PC-3 (cell line): ENCODE measurements at regions of chr14 and their contacts with region 1.

Region 1: GRCh38 chr14:92649935-92650545 is 98.4 kb downstream of the LGMN start:
- DNase-seq: peak; percentile 72
- ATAC-seq: no peak
- H3K4me3 ChIP-seq: no peak overlapping the region
- H3K27ac ChIP-seq: peak overlapping the region; percentile 58
- H3K4me1 ChIP-seq: peaks cover 52% of the 10 kb centered on the region
- H3K27me3 ChIP-seq: no peaks in the 10 kb centered on the region
- CTCF ChIP-seq: no peak

Region 2: GRCh38 chr14:92625213-92625612 is 24.8 kb before region 1 on chr14:
- CTCF ChIA-PET with region 1: no interaction called
- POLR2A ChIA-PET with region 1: interaction called, 5 read pairs
- intact Hi-C with region 1: loop called (anchors 2 kb)
- DNase-seq: peak; percentile 95
- ATAC-seq: peak; percentile 94
- H3K4me3 ChIP-seq: no peak overlapping the region
- H3K27ac ChIP-seq: peak overlapping the region; percentile 95
- H3K4me1 ChIP-seq: peaks cover 24% of the 10 kb centered on the region
- H3K27me3 ChIP-seq: no peaks in the 10 kb centered on the region
- CTCF ChIP-seq: no peak

Region 3: DNA sequence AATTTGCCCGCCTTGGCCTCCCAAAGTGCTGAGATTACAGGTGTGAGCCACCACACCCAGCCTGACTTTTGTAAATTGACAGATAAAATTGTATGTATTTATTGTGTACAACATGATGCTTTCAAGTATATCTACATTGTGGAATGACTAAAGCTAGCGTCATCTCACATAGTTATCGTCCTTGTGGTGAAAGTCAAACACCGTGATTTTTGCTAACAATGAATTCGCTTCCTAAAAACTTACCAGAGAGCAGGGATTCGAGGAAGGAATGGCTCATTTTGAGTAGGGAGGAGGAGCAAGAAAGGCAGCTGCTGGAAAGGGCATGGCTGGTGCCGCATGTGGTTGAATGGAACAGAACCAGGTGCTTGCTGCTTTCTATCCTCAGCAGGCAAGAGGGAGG is 13.0 kb after region 1 on chr14:
- CTCF ChIA-PET with region 1: no interaction called
- POLR2A ChIA-PET with region 1: interaction called, 14 read pairs
- intact Hi-C with region 1: loop called (anchors 1 kb)
- DNase-seq: peak; percentile 95
- ATAC-seq: peak; percentile 96
- H3K4me3 ChIP-seq: no peak overlapping the region
- H3K27ac ChIP-seq: peak overlapping the region; percentile 74
- H3K4me1 ChIP-seq: peaks cover 6% of the 10 kb centered on the region
- H3K27me3 ChIP-seq: no peaks in the 10 kb centered on the region
- CTCF ChIP-seq: no peak

Region 4: DNA sequence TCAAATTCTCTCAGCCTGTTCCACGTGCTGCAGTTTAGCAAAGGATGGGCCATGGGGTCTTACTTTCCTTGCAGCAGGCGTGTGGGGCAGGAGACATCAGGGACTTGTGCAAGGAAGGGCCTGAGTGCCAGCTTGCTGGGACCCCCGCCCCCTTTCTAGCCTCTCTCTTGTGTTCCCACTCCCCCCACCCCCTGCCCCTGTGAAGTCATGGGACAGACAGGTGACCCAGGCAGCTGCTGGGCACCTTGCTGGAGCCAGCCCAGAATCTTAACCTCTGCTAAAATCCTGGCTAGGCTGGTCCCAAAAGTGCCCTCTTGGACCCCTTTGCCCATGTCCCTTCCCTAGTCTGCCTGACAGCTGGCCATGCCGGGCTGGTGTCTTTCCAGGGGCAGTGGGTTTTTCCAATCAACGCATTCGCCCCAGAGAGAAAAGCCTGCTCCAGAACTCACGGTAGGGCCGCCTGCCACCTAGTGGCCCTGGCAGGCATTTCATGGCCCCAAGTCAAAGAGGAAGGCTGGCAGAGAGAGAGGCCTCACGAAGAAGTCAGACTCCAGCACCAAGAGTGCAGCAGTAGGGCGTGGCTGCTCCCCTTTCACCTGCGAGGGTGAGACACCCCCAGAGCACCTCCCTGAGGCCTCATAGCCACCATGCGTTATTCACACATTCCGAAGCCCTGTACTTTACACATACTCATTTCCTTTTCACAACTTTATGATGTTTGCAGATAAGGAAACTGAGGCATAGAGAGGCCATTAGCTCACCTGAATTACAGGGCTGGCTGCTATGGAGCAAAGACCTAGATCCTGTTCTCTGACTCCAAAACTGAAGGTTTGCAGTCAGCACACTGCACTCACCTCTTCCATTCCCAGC is 31.0 kb after region 1 on chr14:
- CTCF ChIA-PET with region 1: no interaction called
- POLR2A ChIA-PET with region 1: no interaction called
- intact Hi-C with region 1: loop called (anchors 5 kb)
- DNase-seq: peak; percentile 92
- ATAC-seq: peak; percentile 93
- H3K4me3 ChIP-seq: no peak overlapping the region
- H3K27ac ChIP-seq: peak overlapping the region; percentile 82
- H3K4me1 ChIP-seq: peaks cover 12% of the 10 kb centered on the region
- H3K27me3 ChIP-seq: no peaks in the 10 kb centered on the region
- CTCF ChIP-seq: peak; percentile 94

Region 5: DNA sequence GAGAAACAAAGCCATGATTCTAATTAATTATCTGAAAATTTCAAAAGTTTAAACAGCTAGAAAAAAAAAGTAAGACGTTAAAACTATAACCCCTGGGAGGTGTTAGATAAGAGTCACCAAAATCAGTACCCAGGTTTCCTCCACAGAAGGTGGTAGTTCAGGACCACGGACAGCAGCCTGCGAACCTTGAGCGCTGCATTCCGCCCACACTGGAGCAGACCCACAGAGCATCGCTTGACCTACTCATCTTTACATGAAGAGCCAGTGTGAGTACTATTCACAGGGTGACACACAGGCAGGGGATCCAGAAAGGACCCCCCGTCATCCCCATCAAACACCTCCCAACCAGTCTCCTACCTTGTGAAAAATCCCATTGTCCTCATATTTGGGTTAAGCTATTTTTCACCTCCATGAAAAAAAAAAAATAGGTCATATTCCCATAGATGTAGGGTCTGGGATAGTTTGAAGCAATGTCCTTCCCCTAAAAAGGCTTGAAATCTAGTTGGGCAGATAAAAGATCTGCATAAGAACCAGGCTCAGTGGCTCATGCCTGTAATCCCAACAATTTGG is 264.1 kb after region 1 on chr14:
- CTCF ChIA-PET with region 1: no interaction called
- POLR2A ChIA-PET with region 1: no interaction called
- intact Hi-C with region 1: no loop called
- DNase-seq: peak; percentile 48
- ATAC-seq: peak; percentile 50; the same call in 1 of the 2 replicates
- H3K4me3 ChIP-seq: no peak overlapping the region
- H3K27ac ChIP-seq: no peak overlapping the region
- H3K4me1 ChIP-seq: no peaks in the 10 kb centered on the region
- H3K27me3 ChIP-seq: no peaks in the 10 kb centered on the region
- CTCF ChIP-seq: no peak